A673 (cell line): ENCODE measurements at regions of chr6 and their contacts with region 1.

Region 1: DNA sequence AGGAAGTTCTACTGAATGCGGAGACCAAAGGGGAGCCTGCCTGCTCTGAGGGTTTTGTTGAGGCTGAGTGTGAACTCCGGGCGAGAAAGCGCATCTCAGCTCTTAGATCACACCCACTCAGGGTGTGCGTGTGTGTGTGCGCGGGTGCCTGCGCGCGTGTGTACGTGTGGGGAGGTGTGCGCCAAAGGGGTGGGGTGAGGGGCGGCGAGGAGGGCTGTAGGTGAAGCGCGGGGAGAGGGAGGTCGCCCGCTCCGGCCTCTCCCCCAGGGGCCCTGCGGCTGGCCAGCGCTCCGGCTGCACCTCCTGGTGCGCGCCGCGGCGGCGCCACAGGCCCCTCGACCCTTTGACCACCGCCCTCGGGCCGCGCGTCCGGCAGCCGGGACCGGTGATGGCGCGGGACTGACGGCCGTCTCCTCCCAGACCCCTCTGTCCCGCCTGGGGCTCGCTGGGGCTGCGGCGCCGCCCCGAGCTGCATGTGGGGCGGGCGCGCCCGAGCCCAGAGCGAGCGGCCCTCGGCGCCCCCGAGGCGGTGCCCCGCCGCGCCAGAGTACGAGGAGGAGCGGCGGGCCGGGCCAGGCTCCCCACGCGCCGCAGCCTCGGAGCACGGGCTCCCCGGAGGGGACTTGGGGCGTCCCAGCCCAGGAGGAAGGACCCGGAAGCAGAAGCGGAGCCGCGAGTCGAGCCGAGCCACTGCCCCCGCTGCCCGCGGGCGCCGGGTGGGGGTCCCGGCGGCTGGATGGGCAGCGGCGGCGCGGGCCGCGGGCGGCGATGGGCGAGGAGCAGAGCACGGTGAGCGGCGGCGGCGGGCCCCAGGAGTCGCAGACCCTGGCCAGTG is at the start of gene RNF217:
- DNase-seq: peak; percentile 71
- H3K4me3 ChIP-seq: peak within 1 kb of the TSS; percentile 83
- H3K27ac ChIP-seq: peak within 1 kb of the TSS; percentile 92
- H3K4me1 ChIP-seq: peaks cover 45% of the 10 kb centered on the region
- H3K27me3 ChIP-seq: no peaks in the 10 kb centered on the region
- CTCF ChIP-seq: no peak
- total RNA-seq, gene RNF217: 18.9 and 20.6 TPM in 2 replicates

Region 2: DNA sequence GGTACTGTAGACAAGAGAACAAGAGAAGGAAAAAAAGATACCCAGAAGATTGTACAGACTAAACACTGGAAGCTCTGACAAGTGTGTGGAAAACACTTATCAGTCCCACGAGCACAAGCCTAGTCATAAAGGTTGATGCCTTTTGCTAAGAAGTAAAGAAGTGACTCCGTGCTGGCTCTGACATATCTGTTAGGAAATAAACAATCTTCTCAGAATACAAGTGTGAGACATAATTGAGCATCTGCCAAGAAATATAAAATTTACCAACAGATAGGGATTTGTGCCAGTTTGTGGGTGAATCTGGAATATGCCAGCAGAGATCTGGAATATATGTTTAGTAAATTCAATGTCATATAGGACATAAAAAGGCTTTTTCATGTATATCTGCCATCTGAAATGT is 258.5 kb before region 1 on chr6:
- CTCF ChIA-PET with region 1: no interaction called
- POLR2A ChIA-PET with region 1: no interaction called
- intact Hi-C with region 1: no loop called
- DNase-seq: no peak
- H3K4me3 ChIP-seq: no peak overlapping the region
- H3K27ac ChIP-seq: no peak overlapping the region
- H3K4me1 ChIP-seq: peaks cover 6% of the 10 kb centered on the region
- H3K27me3 ChIP-seq: no peaks in the 10 kb centered on the region
- CTCF ChIP-seq: no peak

Region 3: DNA sequence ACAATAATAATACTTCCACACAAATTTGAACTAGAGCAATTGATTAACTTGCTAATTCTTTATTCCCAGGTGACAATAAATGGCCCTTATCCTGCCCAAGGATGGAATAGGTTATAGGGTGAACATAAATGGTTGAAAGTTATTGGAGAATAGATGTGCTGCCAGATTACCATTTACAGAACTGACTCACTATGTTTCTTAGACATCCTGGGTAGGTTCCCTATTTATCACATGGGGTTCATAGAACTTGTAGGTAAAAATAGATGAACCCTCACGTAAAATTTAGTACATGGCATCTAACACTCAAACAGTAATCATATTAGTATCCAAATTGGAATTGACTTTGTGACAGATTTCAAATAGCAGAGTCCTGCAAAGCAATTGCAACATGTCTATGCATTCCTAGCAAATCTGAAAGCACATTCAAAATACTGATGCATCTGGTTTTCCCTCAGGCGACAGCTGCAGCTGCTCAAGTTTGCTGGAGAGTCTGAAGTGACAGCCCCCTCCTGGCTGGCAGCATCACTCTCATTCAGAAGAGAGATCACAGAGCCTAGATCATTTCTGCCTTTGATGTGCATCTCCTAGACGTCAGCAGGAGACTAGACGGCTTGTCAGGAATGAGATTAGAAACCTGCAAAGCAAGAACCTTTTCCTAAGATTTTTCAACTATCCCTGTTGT is 80.0 kb before region 1 on chr6:
- CTCF ChIA-PET with region 1: no interaction called
- POLR2A ChIA-PET with region 1: no interaction called
- intact Hi-C with region 1: loop called (anchors 2 kb)
- DNase-seq: peak; percentile 92
- H3K4me3 ChIP-seq: no peak overlapping the region
- H3K27ac ChIP-seq: peak overlapping the region; percentile 76
- H3K4me1 ChIP-seq: peaks cover 47% of the 10 kb centered on the region
- H3K27me3 ChIP-seq: no peaks in the 10 kb centered on the region
- CTCF ChIP-seq: 0 out of 2 replicates have a peak, but pooled peaks have one; percentile 16

Region 4: GRCh38 chr6:125099211-125100073 is 137.4 kb after region 1 on chr6:
- CTCF ChIA-PET with region 1: no interaction called
- POLR2A ChIA-PET with region 1: no interaction called
- intact Hi-C with region 1: loop called (anchors 5 kb)
- DNase-seq: peak; percentile 70
- H3K4me3 ChIP-seq: peak overlapping the region; percentile 56
- H3K27ac ChIP-seq: peak overlapping the region; percentile 21
- H3K4me1 ChIP-seq: peaks cover 27% of the 10 kb centered on the region
- H3K27me3 ChIP-seq: no peaks in the 10 kb centered on the region
- CTCF ChIP-seq: 0 out of 2 replicates have a peak, but pooled peaks have one; percentile 22

Region 5: DNA sequence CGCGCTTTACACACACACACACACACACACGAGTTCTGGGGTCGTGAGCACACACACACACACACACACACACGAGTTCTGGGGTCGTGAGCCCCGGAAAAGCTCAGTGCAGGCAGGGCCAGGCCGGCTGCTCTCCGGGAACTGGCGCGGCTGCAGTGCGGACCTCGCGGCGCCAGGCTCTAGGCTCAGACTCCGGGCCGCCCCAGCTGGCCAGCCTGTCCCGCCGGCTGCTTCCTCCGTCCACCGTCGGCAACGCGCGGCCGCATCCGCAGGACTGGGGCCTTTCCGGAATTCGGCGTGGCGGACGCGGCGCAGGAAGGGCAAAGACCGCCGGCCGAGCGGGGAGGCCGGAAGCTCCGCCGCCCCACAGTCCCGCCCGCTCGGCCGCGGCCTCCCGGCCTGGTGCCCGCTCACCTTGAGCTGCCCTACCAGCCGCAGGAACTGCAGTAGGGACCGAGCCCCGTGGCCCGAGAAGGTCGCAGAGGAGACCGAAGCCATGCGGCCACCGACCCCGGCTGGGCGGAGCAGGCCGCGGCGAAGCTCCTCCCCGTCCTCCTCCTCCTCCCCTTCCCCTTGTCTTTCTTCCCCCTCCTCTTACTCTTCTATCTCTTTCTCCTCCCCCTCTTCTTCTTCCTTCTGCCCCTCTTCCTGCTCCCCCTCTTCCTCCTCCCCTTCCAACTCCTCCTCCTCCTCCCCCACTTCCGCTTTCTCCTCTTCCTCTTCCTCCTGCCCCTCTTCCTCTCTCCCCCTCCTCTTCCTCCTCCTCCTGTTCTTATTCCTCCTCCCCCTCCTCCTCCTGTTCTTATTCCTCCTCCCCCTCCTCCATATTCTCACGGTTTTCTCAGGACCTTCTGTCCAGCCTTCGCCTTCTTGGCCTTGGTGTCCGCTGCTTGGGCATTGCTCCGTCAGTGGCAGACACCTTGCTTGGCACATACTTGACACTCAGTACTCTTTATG is 339.7 kb after region 1 on chr6 and contains the start of gene HDDC2:
- CTCF ChIA-PET with region 1: no interaction called
- POLR2A ChIA-PET with region 1: no interaction called
- intact Hi-C with region 1: loop called (anchors 10 kb)
- DNase-seq: peak; percentile 53
- H3K4me3 ChIP-seq: peak within 1 kb of the TSS; percentile 89
- H3K27ac ChIP-seq: peak within 1 kb of the TSS; percentile 89
- H3K4me1 ChIP-seq: peaks cover 14% of the 10 kb centered on the region
- H3K27me3 ChIP-seq: no peaks in the 10 kb centered on the region
- CTCF ChIP-seq: no peak
- total RNA-seq, gene HDDC2: 87.6 and 93.2 TPM in 2 replicates